CD4-positive, alpha-beta T cell (primary cell): ENCODE measurements at regions of chr3 and their contacts with region 1.

Region 1: GRCh38 chr3:9731206-9732079 is at the start of gene BRPF1:
- DNase-seq: peak; percentile 98 to 100 (median 100)
- ATAC-seq: peak; percentile 91
- H3K4me3 ChIP-seq: peak within 1 kb of the TSS; percentile 86
- H3K4me3 Mint-ChIP-seq: peak within 1 kb of the TSS; percentile 88
- H3K27ac ChIP-seq: peak within 1 kb of the TSS; percentile 84 to 96
- H3K27ac Mint-ChIP-seq: peak within 1 kb of the TSS; percentile 91
- H3K4me1 ChIP-seq: peaks cover 45% of the 10 kb centered on the region
- H3K4me1 Mint-ChIP-seq: peaks cover 79% of the 10 kb centered on the region
- H3K27me3 ChIP-seq: no peaks in the 10 kb centered on the region
- H3K27me3 Mint-ChIP-seq: no peaks in the 10 kb centered on the region
- CTCF ChIP-seq: no peak
- total RNA-seq, gene BRPF1: 23.7 to 25.6 TPM

Region 2: GRCh38 chr3:8963137-8963869 is 768.1 kb before region 1 on chr3 and contains the start of gene RAD18:
- CTCF ChIA-PET with region 1: no interaction called
- POLR2A ChIA-PET with region 1: no interaction called
- intact Hi-C with region 1: loop called in 1 of 2 experiments (anchors 5 kb)
- DNase-seq: peak; percentile 87 to 96 (median 90)
- ATAC-seq: peak; percentile 93
- H3K4me3 ChIP-seq: peak within 1 kb of the TSS; percentile 88
- H3K4me3 Mint-ChIP-seq: peak within 1 kb of the TSS; percentile 97
- H3K27ac ChIP-seq: peak within 1 kb of the TSS; percentile 80 to 92
- H3K27ac Mint-ChIP-seq: peak within 1 kb of the TSS; percentile 95
- H3K4me1 ChIP-seq: peaks cover 15% of the 10 kb centered on the region
- H3K4me1 Mint-ChIP-seq: peaks cover 43% of the 10 kb centered on the region
- H3K27me3 ChIP-seq: no peaks in the 10 kb centered on the region
- H3K27me3 Mint-ChIP-seq: peaks cover 1% of the 10 kb centered on the region
- CTCF ChIP-seq: no peak
- total RNA-seq, gene RAD18: 9.6 to 10.0 TPM

Region 3: DNA sequence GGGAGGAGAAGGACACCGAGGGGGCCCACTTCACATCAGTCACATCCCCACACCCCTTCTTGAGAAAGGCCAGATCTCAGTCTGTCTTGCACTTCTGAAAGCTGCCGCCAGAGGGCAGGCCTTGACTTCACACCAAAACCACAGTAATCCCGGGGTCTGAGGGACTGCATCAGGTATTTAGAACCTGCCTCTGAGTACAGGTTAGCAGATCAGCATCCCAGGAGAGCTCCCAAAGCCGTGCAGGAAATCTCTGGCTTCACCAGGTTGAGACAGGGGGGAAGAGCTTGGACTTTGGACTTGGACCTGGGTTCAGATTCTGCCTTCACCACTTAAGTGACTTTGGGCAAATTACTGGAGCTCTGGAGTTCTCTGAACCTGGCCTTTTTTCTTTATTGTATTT is 228.2 kb before region 1 on chr3:
- CTCF ChIA-PET with region 1: no interaction called
- POLR2A ChIA-PET with region 1: no interaction called
- intact Hi-C with region 1: loop called (anchors 2 to 5 kb)
- DNase-seq: peak; percentile 48 to 79 (median 62)
- ATAC-seq: peak; percentile 58
- H3K4me3 ChIP-seq: no peak overlapping the region
- H3K4me3 Mint-ChIP-seq: no peak overlapping the region
- H3K27ac ChIP-seq: no peak overlapping the region
- H3K27ac Mint-ChIP-seq: no peak overlapping the region
- H3K4me1 ChIP-seq: peaks cover 11% of the 10 kb centered on the region
- H3K4me1 Mint-ChIP-seq: no peaks in the 10 kb centered on the region
- H3K27me3 ChIP-seq: peaks cover 34% of the 10 kb centered on the region in 2 experiments
- H3K27me3 Mint-ChIP-seq: peaks cover 48% of the 10 kb centered on the region
- CTCF ChIP-seq: peak; percentile 81

Region 4: DNA sequence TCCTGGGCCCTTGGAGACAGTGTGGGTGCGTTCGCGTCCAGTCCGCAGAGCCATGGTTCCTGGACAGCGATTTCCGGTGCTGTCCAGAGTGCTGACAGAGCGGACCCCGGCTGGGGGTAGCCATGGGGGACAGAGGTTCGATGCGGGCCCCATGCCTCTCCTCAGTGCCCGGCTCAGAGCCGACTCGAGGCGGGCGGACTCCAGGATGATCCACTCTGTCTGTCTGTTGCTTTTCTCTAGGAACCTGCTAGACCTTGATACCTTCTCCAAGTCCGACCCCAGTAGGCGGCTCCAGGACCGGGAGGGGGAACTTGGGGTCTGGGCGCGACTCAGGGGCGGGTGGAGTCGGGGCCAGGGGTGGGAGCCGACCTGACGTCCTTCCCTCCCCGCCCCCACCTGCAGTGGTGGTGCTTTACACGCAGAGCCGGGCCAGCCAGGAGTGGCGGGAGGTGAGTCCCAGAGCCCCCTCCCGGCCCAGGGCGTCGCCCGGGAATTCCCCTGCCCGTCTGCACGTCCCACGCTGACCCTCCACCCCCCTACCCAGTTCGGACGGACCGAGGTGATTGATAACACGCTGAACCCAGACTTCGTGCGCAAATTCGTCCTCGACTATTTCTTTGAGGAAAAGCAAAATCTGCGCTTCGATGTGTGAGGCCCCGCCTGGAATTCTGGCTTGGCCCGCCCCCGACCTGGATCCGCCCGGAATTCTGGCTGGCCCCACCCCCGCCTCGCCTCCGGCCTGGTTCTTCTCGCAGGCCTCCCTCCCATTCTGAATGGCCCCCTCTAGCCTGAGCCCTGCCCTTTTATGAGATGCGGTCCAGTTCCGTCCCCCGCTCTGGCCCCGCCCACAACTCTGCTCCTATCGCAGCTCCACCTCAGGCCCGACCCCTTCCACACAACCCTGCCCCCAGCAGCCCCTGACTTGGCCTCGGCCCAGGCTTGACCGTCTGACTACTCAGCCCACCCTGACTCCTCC is 26.8 kb before region 1 on chr3:
- CTCF ChIA-PET with region 1: no interaction called
- POLR2A ChIA-PET with region 1: interaction called, 5 read pairs
- intact Hi-C with region 1: loop called in 1 of 2 experiments (anchors 2 kb)
- DNase-seq: peak in 4 of 14 experiments; percentile 5 to 40 (median 20)
- ATAC-seq: peak; percentile 24
- H3K4me3 ChIP-seq: peak overlapping the region; percentile 13
- H3K4me3 Mint-ChIP-seq: peak overlapping the region; percentile 25
- H3K27ac ChIP-seq: no peak overlapping the region
- H3K27ac Mint-ChIP-seq: no peak overlapping the region
- H3K4me1 ChIP-seq: peaks cover 14% of the 10 kb centered on the region
- H3K4me1 Mint-ChIP-seq: peaks cover 12% of the 10 kb centered on the region
- H3K27me3 ChIP-seq: peaks cover 15 to 17% of the 10 kb centered on the region in 2 experiments
- H3K27me3 Mint-ChIP-seq: peaks cover 33% of the 10 kb centered on the region
- CTCF ChIP-seq: no peak

Region 5: DNA sequence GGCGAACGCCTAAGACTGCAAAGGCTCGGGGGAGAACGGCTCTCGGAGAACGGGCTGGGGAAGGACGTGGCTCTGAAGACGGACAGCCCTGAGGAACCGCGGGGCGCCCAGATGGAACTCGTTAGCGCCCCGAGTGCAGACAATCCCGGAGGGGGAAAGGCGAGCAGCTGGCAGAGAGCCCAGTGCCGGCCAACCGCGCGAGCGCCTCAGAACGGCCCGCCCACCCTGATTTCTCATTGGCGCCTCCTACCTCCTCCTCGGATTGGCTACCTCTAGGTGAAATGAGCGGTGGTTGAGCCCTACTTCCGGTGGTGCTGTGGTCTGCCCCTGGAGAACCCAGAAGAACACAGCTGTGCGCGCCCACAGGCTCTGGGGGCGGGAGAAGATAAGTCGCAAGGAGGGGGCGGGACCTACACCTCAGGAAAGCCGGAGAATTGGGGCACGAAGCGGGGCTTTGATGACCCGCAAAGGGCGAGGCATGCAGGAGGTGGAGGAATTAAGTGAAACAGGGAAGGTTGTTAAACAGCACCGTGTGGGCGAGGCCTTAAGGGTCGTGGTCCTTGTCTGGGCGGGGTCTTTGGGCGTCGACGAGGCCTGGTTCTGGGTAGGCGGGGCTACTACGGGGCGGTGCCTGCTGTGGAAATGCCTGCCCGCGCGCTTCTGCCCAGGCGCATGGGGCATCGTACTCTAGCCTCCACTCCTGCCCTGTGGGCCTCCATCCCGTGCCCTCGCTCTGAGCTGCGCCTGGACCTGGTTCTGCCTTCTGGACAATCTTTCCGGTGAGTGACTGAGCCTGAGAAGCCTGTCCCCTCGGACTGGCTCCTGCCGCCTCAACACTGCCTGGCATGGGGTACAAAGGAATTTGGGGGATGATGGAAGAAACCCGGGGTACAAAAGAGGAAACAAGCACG is 18.5 kb after region 1 on chr3 and contains the start of gene OGG1:
- CTCF ChIA-PET with region 1: interaction called, 9 read pairs
- POLR2A ChIA-PET with region 1: interaction called, 33 read pairs
- intact Hi-C with region 1: loop called (anchors 1 kb)
- DNase-seq: peak; percentile 84 to 98 (median 91)
- ATAC-seq: peak; percentile 94
- H3K4me3 ChIP-seq: peak within 1 kb of the TSS; percentile 82
- H3K4me3 Mint-ChIP-seq: peak within 1 kb of the TSS; percentile 95
- H3K27ac ChIP-seq: peak within 1 kb of the TSS; percentile 69 to 74
- H3K27ac Mint-ChIP-seq: peak within 1 kb of the TSS; percentile 85
- H3K4me1 ChIP-seq: peaks cover 37% of the 10 kb centered on the region
- H3K4me1 Mint-ChIP-seq: peaks cover 48% of the 10 kb centered on the region
- H3K27me3 ChIP-seq: no peaks in the 10 kb centered on the region
- H3K27me3 Mint-ChIP-seq: no peaks in the 10 kb centered on the region
- CTCF ChIP-seq: no peak
- total RNA-seq, gene OGG1: 7.1 to 8.9 TPM

Region 6: DNA sequence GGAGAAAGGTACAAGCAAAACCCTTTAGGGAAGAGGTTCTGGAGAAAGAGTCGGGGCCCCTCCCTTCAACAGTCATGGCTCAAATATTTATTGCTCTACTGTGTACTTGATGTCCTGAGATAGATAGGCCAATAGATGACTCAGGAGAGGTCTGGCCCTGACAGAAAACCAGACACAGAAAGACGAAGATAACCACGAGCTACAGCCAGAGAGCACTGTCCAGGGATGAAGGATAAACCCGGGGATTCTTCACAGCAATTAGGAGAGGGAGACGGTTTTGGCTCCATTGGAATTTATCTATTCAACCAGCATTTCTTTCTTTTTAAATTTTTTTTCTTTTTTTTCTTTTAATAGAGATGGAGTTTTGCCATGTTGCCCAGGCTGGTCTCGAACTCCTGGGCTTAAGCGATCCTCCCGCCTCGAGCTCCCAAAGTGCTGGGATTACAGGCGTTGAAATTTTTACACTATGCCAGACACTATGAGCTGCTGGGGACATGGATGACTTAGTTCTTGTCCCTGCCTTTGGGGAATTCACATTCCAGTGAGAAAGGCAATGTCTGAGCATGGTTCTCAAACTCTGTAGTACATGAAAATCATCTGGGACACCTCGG is 153.2 kb after region 1 on chr3:
- CTCF ChIA-PET with region 1: no interaction called
- POLR2A ChIA-PET with region 1: no interaction called
- intact Hi-C with region 1: loop called in 1 of 2 experiments (anchors 5 kb)
- DNase-seq: no peak
- ATAC-seq: no peak
- H3K4me3 ChIP-seq: no peak overlapping the region
- H3K4me3 Mint-ChIP-seq: no peak overlapping the region
- H3K27ac ChIP-seq: no peak overlapping the region
- H3K27ac Mint-ChIP-seq: no peak overlapping the region
- H3K4me1 ChIP-seq: no peaks in the 10 kb centered on the region
- H3K4me1 Mint-ChIP-seq: no peaks in the 10 kb centered on the region
- H3K27me3 ChIP-seq: no peaks in the 10 kb centered on the region
- H3K27me3 Mint-ChIP-seq: no peaks in the 10 kb centered on the region
- CTCF ChIP-seq: no peak

Region 7: GRCh38 chr3:10140996-10141546 is 409.6 kb after region 1 on chr3:
- CTCF ChIA-PET with region 1: no interaction called
- POLR2A ChIA-PET with region 1: no interaction called
- intact Hi-C with region 1: no loop called
- DNase-seq: no peak
- ATAC-seq: no peak
- H3K4me3 ChIP-seq: peak overlapping the region; percentile 85
- H3K4me3 Mint-ChIP-seq: peak overlapping the region; percentile 90
- H3K27ac ChIP-seq: peak overlapping the region; percentile 29 to 84
- H3K27ac Mint-ChIP-seq: peak overlapping the region; percentile 85
- H3K4me1 ChIP-seq: peaks cover 40% of the 10 kb centered on the region
- H3K4me1 Mint-ChIP-seq: peaks cover 32% of the 10 kb centered on the region
- H3K27me3 ChIP-seq: no peaks in the 10 kb centered on the region
- H3K27me3 Mint-ChIP-seq: no peaks in the 10 kb centered on the region
- CTCF ChIP-seq: no peak